ENCODE measurements at regions of chr5 and their contacts with region 1.

Region 1: DNA sequence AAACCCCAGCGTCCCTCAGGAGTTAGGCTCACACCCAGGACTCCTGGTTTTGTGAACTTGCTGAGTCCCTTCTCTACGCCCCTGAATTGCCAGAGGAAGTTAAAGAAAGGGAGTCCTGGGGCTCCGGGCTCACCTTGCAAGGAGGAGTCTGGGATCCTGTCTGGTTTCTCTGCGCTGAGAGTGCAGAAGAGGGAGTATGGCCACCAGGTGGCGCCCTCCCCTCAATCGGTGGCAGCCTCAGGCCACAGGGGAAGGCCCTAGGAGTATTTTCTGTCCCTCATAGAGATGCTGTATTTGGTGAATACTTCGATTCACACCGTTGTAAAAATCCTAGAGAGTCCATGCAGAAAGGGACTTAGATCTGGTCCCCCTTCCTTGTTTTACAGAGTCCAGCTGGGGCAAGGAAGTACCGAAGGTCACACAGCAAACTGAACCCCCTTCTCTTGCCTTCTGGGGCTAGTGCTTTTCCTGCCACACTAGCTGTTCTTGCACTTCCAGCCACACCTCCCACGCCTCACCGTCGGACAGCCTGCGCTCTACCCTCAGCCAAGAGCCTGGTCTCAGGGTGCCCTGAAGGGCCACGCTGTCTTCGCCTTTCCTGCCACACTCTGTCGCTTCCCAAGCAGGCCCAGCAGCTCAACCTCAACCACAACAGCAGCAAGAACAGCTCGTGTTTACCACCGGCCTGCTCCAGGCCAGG is 10.2 kb downstream of the HAND1 start:
- DNase-seq: peak; percentile 18 to 51
- ATAC-seq: peak; percentile 72 to 87
- H3K4me3 ChIP-seq: no peak overlapping the region
- H3K27ac ChIP-seq: no peak overlapping the region
- H3K4me1 ChIP-seq: peaks cover under 1 to 3% of the 10 kb centered on the region in 2 donors
- H3K27me3 ChIP-seq: peaks cover 32 to 36% (median 33%) of the 10 kb centered on the region in 3 donors
- CTCF ChIP-seq: peak; percentile 66 to 91 (median 75)
- POLR2A ChIP-seq: no peak

Region 2: DNA sequence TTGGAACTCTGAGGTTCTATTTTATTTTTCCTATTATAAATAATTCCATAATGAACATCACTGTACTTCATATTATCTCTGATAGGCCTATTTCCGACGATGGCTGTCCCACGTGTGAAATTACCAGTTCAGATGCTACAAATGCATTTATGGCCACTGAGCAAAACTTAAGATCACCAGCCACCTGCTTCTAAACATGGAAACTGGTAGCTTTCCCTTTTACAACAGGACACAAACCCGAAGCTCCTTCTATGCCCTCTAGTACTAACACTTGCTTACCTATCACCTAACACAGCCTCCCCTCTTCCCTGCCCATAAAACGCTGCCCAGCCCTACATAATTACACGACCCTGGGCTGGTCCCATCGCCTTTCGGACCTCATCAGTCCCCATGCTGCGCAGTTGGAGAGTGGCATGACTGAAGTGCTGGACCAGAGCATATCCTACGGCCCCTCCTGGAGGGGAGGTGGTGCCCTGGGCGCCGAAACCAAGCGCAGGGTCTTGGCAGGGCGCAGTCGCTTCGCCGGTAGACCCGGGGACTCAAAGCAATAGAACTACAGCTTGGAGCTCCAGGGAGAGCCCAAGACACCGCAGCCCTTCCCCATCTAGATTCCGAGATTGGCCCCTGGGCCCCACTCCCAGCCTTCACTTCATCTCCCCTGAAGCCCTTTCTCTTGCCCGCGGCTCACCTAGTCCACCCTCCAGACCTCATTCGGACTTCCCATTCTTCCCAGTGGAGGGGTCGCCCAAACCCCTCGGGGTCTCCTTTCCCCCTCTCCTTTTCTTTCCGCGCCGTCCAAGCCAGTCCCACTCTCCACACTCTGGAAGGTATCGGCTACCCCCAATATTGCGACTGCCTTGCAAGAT is 23.0 kb before region 1 on chr5:
- in situ Hi-C with region 1: no loop called
- intact Hi-C with region 1: no loop called
- DNase-seq: no peak
- ATAC-seq: peak; percentile 1 to 12
- H3K4me3 ChIP-seq: peak overlapping the region; percentile 83 to 96 (median 88)
- H3K27ac ChIP-seq: peak overlapping the region; percentile 75 to 84 (median 82)
- H3K4me1 ChIP-seq: peaks cover 22 to 42% of the 10 kb centered on the region in 2 donors
- H3K27me3 ChIP-seq: no peaks in the 10 kb centered on the region
- CTCF ChIP-seq: no peak
- POLR2A ChIP-seq: no peak

Region 3: GRCh38 chr5:154610321-154611154 is 142.7 kb after region 1 on chr5:
- in situ Hi-C with region 1: loop called in 1 of 4 experiments (anchors 5 kb)
- intact Hi-C with region 1: loop called (anchors 1 kb)
- DNase-seq: peak; percentile 32 to 33
- ATAC-seq: peak; percentile 70 to 81
- H3K4me3 ChIP-seq: peak overlapping the region; percentile 5 to 55 (median 39)
- H3K27ac ChIP-seq: no peak overlapping the region
- H3K4me1 ChIP-seq: peaks cover 6 to 15% of the 10 kb centered on the region in 2 donors
- H3K27me3 ChIP-seq: peaks cover 43 to 54% (median 44%) of the 10 kb centered on the region in 3 donors
- CTCF ChIP-seq: peak; percentile 32 to 72 (median 67)
- POLR2A ChIP-seq: no peak

Region 4: GRCh38 chr5:154625031-154625430 is 157.2 kb after region 1 on chr5:
- in situ Hi-C with region 1: no loop called
- intact Hi-C with region 1: no loop called
- DNase-seq: no peak
- ATAC-seq: no peak
- H3K4me3 ChIP-seq: no peak overlapping the region
- H3K27ac ChIP-seq: no peak overlapping the region
- H3K4me1 ChIP-seq: no peaks in the 10 kb centered on the region
- H3K27me3 ChIP-seq: no peaks in the 10 kb centered on the region
- CTCF ChIP-seq: no peak
- POLR2A ChIP-seq: no peak